Activated CD8-positive, alpha-beta T cell treated with anti-CD3 and anti-CD28 coated beads for 36 hours (primary cell): ENCODE measurements at regions of chr10 and their contacts with region 1.

Region 1: DNA sequence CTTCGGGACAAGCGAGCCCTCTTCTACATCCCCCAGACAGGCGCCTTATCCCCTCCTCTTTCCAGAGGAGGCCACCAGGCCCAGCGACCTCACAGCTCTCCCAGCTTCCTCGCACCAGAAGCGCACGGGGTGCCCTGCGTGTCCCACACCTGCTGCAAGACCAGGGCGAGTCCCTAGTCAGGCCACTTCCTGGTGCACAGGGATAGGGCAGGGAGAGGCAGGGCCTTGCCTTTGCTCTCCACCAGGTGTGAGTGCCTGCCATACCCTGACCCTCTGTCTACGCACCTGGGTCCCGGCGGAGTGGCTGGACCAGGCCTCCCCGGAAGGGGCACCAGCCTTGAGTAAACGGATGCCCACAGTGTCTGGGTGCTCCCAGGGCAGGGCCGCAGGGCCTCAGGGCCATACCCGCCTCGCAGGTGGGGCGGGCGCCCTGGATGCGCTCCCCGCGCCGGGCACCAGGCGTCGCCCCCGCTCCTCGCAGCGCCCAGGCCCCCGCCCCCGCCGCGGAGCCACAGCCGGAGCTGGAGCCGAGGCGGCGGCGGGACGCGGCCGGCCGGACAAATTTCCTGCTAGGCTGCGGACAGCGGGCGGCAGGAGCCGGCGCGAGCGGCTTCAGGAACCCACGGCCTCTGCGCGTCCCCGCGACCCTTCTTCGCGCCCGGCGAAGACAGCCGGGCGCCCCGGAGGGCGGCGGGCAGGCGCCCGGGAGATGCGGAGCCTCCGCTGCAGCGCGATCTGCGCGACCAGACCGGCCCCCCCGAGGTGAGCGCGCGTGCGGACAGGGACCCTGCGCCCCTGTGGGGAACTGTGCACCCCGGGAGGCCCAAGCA is at the start of gene PTPRE:
- DNase-seq: peak; percentile 73
- ATAC-seq: peak; percentile 99
- H3K4me3 Mint-ChIP-seq: no peak within 1 kb of the TSS
- H3K27ac Mint-ChIP-seq: no peak within 1 kb of the TSS
- H3K4me1 Mint-ChIP-seq: no peaks in the 10 kb centered on the region
- H3K27me3 Mint-ChIP-seq: peaks cover 31% of the 10 kb centered on the region
- CTCF ChIP-seq: peak; percentile 86
- total RNA-seq, gene PTPRE: 19.9 to 22.3 TPM

Region 2: DNA sequence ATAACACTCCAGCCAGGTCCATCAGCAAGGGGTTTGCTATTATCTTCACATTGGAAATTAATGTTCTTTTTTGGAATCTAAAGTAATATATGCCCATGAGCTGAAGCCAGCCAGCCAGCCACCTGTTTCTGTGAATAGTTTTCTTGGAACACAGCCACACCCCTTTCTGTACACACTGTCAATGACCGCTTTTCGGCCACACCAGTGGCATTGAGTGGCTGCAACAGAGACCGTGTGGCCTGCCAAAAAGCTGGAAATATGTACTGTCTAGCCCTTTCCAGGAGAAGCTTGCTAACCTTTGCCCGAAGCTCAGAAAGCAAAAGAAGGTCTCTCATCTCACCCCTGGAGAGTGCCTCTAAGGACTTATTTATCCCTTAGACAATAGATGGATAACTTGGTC is 456.1 kb before region 1 on chr10:
- CTCF ChIA-PET with region 1: no interaction called
- POLR2A ChIA-PET with region 1: no interaction called
- intact Hi-C with region 1: no loop called
- DNase-seq: no peak
- ATAC-seq: no peak
- H3K4me3 Mint-ChIP-seq: no peak overlapping the region
- H3K27ac Mint-ChIP-seq: no peak overlapping the region
- H3K4me1 Mint-ChIP-seq: no peaks in the 10 kb centered on the region
- H3K27me3 Mint-ChIP-seq: no peaks in the 10 kb centered on the region
- CTCF ChIP-seq: no peak

Region 3: GRCh38 chr10:127649642-127650041 is 257.1 kb before region 1 on chr10:
- CTCF ChIA-PET with region 1: no interaction called
- POLR2A ChIA-PET with region 1: no interaction called
- intact Hi-C with region 1: no loop called
- DNase-seq: peak; percentile 2
- ATAC-seq: no peak
- H3K4me3 Mint-ChIP-seq: no peak overlapping the region
- H3K27ac Mint-ChIP-seq: no peak overlapping the region
- H3K4me1 Mint-ChIP-seq: no peaks in the 10 kb centered on the region
- H3K27me3 Mint-ChIP-seq: no peaks in the 10 kb centered on the region
- CTCF ChIP-seq: no peak

Region 4: GRCh38 chr10:127935071-127935561 is 28.4 kb after region 1 on chr10:
- CTCF ChIA-PET with region 1: no interaction called
- POLR2A ChIA-PET with region 1: no interaction called
- intact Hi-C with region 1: no loop called
- DNase-seq: no peak
- ATAC-seq: no peak
- H3K4me3 Mint-ChIP-seq: no peak overlapping the region
- H3K27ac Mint-ChIP-seq: no peak overlapping the region
- H3K4me1 Mint-ChIP-seq: no peaks in the 10 kb centered on the region
- H3K27me3 Mint-ChIP-seq: peaks cover 6% of the 10 kb centered on the region
- CTCF ChIP-seq: no peak

Region 5: DNA sequence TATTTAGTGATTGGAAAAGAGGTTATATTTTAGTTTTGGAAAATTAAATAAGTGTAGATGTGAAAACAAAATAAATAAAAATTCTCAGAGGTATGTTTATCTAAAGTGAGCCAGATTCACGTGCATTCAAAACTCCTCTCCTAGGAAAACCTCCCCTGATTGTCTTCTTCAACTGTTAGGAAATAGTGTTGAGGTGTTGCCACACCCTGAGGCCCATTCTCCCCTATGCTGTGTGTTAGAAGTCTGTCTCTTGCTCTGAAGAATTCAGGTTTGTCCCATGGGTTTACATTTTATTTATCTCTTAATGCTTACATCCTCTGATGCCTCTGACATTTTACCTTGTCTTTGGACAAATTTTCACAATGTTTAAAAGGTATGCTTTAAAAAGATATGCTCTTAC is 40.4 kb after region 1 on chr10:
- CTCF ChIA-PET with region 1: no interaction called
- POLR2A ChIA-PET with region 1: no interaction called
- intact Hi-C with region 1: no loop called
- DNase-seq: no peak
- ATAC-seq: no peak
- H3K4me3 Mint-ChIP-seq: no peak overlapping the region
- H3K27ac Mint-ChIP-seq: no peak overlapping the region
- H3K4me1 Mint-ChIP-seq: peaks cover 13% of the 10 kb centered on the region
- H3K27me3 Mint-ChIP-seq: no peaks in the 10 kb centered on the region
- CTCF ChIP-seq: no peak

Region 6: GRCh38 chr10:127990846-127991542 is 84.2 kb after region 1 on chr10:
- CTCF ChIA-PET with region 1: interaction called, 14 read pairs
- POLR2A ChIA-PET with region 1: no interaction called
- intact Hi-C with region 1: no loop called
- DNase-seq: peak; percentile 88
- ATAC-seq: peak; percentile 77
- H3K4me3 Mint-ChIP-seq: peak overlapping the region; percentile 50
- H3K27ac Mint-ChIP-seq: peak overlapping the region; percentile 95
- H3K4me1 Mint-ChIP-seq: peaks cover 48% of the 10 kb centered on the region
- H3K27me3 Mint-ChIP-seq: no peaks in the 10 kb centered on the region
- CTCF ChIP-seq: no peak

Region 7: DNA sequence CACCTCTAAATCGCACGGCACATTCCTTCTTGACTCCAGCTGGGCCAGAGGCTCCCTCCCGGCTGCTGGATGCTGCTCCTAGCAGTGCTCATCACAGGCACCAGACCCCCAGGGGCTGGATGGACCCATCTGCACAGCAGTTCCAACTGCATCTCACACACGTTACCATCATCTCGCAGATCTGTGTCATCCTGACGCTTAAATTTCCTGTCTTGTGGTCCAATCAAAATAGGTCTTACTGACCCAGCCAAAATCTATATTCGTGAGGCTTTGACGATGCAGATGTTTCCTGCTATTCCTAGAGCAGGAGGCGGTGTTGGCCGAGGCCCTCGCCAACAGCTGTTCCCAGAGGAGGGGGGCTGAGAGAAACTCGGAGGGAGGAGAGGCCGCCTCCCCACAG is 111.5 kb after region 1 on chr10:
- CTCF ChIA-PET with region 1: interaction called, 188 read pairs
- POLR2A ChIA-PET with region 1: no interaction called
- intact Hi-C with region 1: no loop called
- DNase-seq: no peak
- ATAC-seq: peak; percentile 64
- H3K4me3 Mint-ChIP-seq: peak overlapping the region; percentile 47
- H3K27ac Mint-ChIP-seq: no peak overlapping the region
- H3K4me1 Mint-ChIP-seq: peaks cover 6% of the 10 kb centered on the region
- H3K27me3 Mint-ChIP-seq: peaks cover 4% of the 10 kb centered on the region
- CTCF ChIP-seq: no peak